Activated CD4-positive, alpha-beta memory T cell treated with anti-CD3 and anti-CD28 coated beads for 36 hours (primary cell): ENCODE measurements at regions of chr12 and their contacts with region 1.

Region 1: DNA sequence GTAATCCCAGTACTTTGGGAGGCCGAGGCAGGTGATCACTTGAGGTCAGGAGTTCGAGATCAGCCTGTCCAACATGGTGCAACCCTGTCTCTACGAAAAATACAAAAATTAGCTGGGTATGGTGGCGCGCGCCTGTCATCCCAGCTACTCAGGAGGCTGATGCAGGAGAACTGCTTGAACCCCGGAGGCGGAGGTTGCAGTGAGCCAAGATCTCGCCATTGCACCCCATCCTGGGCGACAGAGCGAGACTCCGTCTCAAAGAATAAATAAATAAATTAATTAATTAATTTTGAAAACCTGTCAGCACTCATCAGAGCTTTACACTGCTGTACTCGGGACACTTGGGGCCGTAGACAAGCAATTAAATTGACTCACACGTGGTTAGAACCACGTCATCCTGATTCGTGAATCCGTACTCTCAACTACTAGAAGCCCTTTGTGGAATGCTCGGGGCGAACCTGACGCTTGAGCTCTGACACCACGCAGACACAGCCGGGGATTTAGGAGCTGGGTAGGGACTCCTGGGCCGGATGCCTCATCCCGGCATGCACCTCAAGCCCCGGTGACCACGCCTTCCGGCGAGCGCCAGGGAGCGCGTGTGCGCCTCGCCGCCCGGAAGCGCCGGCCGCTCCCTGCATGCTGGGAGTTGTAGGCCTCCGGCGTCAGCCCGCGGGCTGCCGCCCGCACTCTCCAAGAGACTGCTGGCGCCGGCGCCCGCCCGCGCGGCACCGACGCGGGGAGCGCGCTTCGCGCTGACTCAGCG is at the start of gene XPOT:
- DNase-seq: peak; percentile 96
- H3K4me3 Mint-ChIP-seq: peak within 1 kb of the TSS; percentile 97
- H3K27ac Mint-ChIP-seq: peak within 1 kb of the TSS; percentile 98
- H3K4me1 Mint-ChIP-seq: peaks cover 38% of the 10 kb centered on the region
- H3K27me3 Mint-ChIP-seq: no peaks in the 10 kb centered on the region
- total RNA-seq, gene XPOT: 145 to 153 TPM

Region 2: GRCh38 chr12:62603061-62603810 is 1800.7 kb before region 1 on chr12:
- CTCF ChIA-PET with region 1: no interaction called
- POLR2A ChIA-PET with region 1: no interaction called
- intact Hi-C with region 1: loop called (anchors 10 kb)
- DNase-seq: peak; percentile 85
- H3K4me3 Mint-ChIP-seq: peak overlapping the region; percentile 84
- H3K27ac Mint-ChIP-seq: peak overlapping the region; percentile 99
- H3K4me1 Mint-ChIP-seq: peaks cover 35% of the 10 kb centered on the region
- H3K27me3 Mint-ChIP-seq: no peaks in the 10 kb centered on the region

Region 3: DNA sequence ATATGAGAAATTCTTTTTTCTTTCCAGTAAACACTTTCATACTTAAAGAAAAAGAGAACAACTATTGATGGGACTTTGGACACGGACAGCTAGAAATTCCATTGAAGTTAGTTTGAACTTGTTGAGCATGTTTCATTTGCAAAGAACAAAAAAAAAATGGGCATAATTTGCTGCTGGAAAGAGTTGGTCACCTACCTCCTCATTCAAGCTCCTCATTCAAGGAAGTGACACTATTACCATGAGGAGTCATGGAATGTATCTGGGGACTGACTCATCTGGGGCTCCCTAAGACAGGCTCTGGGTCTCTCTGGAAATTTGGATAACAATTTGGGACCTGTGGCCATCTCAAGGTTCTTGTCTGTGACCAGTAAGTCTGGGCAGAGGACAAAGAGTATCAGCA is 232.2 kb before region 1 on chr12:
- CTCF ChIA-PET with region 1: no interaction called
- POLR2A ChIA-PET with region 1: no interaction called
- intact Hi-C with region 1: no loop called
- DNase-seq: no peak
- H3K4me3 Mint-ChIP-seq: no peak overlapping the region
- H3K27ac Mint-ChIP-seq: no peak overlapping the region
- H3K4me1 Mint-ChIP-seq: no peaks in the 10 kb centered on the region
- H3K27me3 Mint-ChIP-seq: no peaks in the 10 kb centered on the region

Region 4: GRCh38 chr12:64222009-64222765 is 181.7 kb before region 1 on chr12 and contains the start of gene KICS2:
- CTCF ChIA-PET with region 1: no interaction called
- POLR2A ChIA-PET with region 1: interaction called, 5 read pairs
- intact Hi-C with region 1: loop called (anchors 1 kb)
- DNase-seq: peak; percentile 94
- H3K4me3 Mint-ChIP-seq: peak within 1 kb of the TSS; percentile 83
- H3K27ac Mint-ChIP-seq: peak within 1 kb of the TSS; percentile 84
- H3K4me1 Mint-ChIP-seq: peaks cover 20% of the 10 kb centered on the region
- H3K27me3 Mint-ChIP-seq: peaks cover 2% of the 10 kb centered on the region
- total RNA-seq, gene KICS2: 12.4 to 14.1 TPM

Region 5: DNA sequence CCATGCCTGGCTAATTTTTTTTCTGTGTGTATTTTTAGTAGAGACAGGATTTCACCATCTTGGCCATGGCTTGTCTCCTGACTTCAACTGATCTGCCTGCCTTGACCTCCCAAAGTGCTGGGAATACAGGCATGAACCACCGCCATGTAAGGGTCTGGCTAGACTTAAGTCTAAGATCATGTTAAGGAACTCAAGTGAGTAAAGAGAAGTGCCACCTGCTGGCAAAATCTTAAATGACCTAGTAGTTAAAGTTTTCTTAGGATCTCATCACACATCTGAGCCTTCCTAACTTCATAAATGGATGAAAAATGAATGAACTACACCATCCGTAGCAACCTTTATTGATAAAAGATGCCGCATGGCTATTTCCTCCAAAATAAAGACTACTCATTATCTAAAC is 11.7 kb before region 1 on chr12:
- CTCF ChIA-PET with region 1: interaction called, 4 read pairs
- POLR2A ChIA-PET with region 1: no interaction called
- intact Hi-C with region 1: loop called (anchors 1 kb)
- DNase-seq: no peak
- H3K4me3 Mint-ChIP-seq: no peak overlapping the region
- H3K27ac Mint-ChIP-seq: no peak overlapping the region
- H3K4me1 Mint-ChIP-seq: peaks cover 7% of the 10 kb centered on the region
- H3K27me3 Mint-ChIP-seq: no peaks in the 10 kb centered on the region

Region 6: GRCh38 chr12:64459394-64459891 is 55.6 kb after region 1 on chr12:
- CTCF ChIA-PET with region 1: no interaction called
- POLR2A ChIA-PET with region 1: interaction called, 4 read pairs
- intact Hi-C with region 1: loop called (anchors 1 kb)
- DNase-seq: no peak
- H3K4me3 Mint-ChIP-seq: peak overlapping the region; percentile 77
- H3K27ac Mint-ChIP-seq: peak overlapping the region; percentile 91
- H3K4me1 Mint-ChIP-seq: peaks cover 45% of the 10 kb centered on the region
- H3K27me3 Mint-ChIP-seq: no peaks in the 10 kb centered on the region

Region 7: DNA sequence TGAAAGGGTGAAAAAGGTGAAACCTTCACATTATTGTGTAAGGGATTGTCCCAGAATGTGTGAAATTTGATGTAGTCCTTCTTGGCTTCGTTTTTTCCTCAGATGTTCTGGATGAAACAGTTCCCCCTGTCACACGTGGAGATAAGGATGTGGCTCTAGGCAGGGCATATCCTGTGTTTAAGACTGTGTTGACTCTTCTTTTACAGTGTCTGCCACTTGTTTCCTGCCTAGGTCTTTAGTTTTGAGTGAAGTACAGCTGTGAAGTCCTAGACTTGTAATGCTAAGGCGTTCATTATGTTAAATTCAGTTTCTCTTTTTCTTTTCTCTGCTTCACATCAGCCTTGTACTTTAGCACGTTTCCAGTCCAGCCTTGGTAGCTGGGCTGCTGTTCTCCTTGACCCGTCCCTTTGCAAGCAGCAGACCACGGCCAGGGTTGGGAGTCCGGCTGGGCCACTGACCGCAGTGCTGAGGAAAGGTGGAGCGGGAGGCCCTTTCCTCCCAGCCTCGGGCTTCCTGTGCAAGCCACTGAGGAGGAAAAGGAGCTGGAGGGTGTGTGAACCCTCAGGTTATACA is 265.5 kb after region 1 on chr12:
- CTCF ChIA-PET with region 1: no interaction called
- POLR2A ChIA-PET with region 1: no interaction called
- intact Hi-C with region 1: loop called (anchors 5 kb)
- DNase-seq: peak; percentile 50
- H3K4me3 Mint-ChIP-seq: peak overlapping the region; percentile 85
- H3K27ac Mint-ChIP-seq: peak overlapping the region; percentile 96
- H3K4me1 Mint-ChIP-seq: peaks cover 91% of the 10 kb centered on the region
- H3K27me3 Mint-ChIP-seq: no peaks in the 10 kb centered on the region

Region 8: DNA sequence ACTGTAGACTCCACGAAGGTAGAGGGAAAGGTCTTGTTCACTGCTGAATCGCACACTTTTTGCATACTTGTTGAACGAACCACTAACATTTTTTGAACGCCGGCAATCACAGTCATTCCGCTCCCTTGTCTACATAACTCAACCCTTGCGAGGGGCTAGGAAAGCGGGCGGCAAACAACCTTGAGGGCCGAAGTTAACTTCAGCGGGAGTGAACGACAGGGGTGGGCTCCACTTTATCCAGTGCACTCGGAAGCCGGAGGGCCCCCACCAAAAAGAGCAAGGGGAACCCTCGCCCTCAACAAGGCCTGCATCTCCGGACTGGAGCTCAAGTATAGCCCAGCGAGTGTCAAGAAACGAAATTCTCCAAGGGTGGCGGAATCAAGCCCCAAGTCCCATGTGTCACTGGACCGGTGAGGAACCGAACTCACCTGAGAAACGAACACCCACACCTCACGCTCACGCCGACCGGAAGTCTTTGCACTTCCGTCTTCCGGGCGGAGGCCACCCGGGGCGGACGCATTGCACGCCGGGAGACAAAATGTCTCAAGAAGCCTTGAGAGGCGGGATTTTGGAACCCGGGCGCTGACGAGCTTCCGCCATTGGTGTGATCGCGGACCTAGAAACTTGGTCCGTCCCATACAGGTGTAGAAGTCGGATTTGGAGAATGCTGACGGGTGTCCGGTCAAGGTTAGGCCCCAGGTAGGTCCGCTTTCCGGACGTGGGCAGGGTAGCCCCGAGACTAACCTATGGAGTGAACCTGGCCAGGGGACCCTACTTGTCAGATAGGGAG is 1726.6 kb after region 1 on chr12 and contains the start of gene LLPH:
- CTCF ChIA-PET with region 1: no interaction called
- POLR2A ChIA-PET with region 1: no interaction called
- intact Hi-C with region 1: loop called (anchors 10 kb)
- DNase-seq: peak; percentile 94
- H3K4me3 Mint-ChIP-seq: peak within 1 kb of the TSS; percentile 96
- H3K27ac Mint-ChIP-seq: peak within 1 kb of the TSS; percentile 94
- H3K4me1 Mint-ChIP-seq: peaks cover 50% of the 10 kb centered on the region
- H3K27me3 Mint-ChIP-seq: no peaks in the 10 kb centered on the region
- total RNA-seq, gene LLPH: 29.1 to 31.2 TPM